Colonic mucosa (tissue), 4 donors: ENCODE measurements at regions of chr12 and their contacts with region 1.

Region 1: GRCh38 chr12:50314629-50315312 is 31.5 kb upstream of the LIMA1 start:
- DNase-seq: no peak
- H3K4me3 ChIP-seq: no peak overlapping the region
- H3K27ac ChIP-seq: no peak overlapping the region
- H3K4me1 ChIP-seq: no peaks in the 10 kb centered on the region
- H3K27me3 ChIP-seq: no peaks in the 10 kb centered on the region
- CTCF ChIP-seq: peak; percentile 14

Region 2: DNA sequence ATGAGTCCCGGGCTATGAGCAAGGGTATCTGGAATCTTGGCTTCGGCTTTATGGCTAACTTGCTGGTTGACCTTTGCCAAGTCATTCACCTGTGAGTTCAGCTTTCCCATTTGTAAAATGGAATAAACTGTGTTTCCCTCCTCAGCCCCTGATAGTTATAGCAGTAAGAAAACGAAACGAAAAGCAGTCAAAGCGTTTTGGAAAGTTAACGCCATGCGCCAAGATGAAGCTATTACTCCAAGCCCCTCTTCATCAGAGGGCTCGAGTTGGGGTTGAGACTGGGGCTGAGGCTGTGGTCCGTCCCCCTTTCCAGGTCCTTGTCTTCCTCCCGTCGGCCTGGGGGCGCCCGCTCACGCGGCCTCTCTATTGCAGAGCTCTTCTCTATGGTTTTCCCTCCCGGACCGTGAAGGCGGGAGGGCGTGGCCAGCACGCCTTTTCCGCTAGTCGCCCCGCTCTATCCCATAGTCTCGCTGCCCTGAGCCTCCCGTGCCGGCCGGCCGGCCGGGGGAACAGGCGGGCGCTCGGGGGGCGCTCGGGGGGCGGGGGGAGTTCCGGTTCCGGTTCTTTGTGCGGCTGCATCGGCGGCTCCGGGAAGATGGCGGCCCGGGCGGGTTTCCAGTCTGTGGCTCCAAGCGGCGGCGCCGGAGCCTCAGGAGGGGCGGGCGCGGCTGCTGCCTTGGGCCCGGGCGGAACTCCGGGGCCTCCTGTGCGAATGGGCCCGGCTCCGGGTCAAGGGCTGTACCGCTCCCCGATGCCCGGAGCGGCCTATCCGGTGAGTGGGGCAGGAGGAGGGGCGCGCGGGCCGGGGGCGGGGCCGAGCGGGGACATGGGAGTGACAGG is 229.8 kb before region 1 on chr12 and contains the start of gene SMARCD1:
- intact Hi-C with region 1: loop called (anchors 10 kb)
- DNase-seq: peak; percentile 92
- H3K4me3 ChIP-seq: peak within 1 kb of the TSS; percentile 93
- H3K27ac ChIP-seq: peak within 1 kb of the TSS; percentile 88
- H3K4me1 ChIP-seq: no peaks in the 10 kb centered on the region
- H3K27me3 ChIP-seq: no peaks in the 10 kb centered on the region
- CTCF ChIP-seq: peak; percentile 25
- total RNA-seq, gene SMARCD1: 30.6 to 43.9 TPM

Region 3: GRCh38 chr12:50132505-50133135 is 182.2 kb before region 1 on chr12:
- intact Hi-C with region 1: loop called (anchors 5 kb)
- DNase-seq: no peak
- H3K4me3 ChIP-seq: no peak overlapping the region
- H3K27ac ChIP-seq: no peak overlapping the region
- H3K4me1 ChIP-seq: no peaks in the 10 kb centered on the region
- H3K27me3 ChIP-seq: no peaks in the 10 kb centered on the region
- CTCF ChIP-seq: peak; percentile 59

Region 4: GRCh38 chr12:50151047-50151687 is 163.6 kb before region 1 on chr12:
- intact Hi-C with region 1: no loop called
- DNase-seq: no peak
- H3K4me3 ChIP-seq: no peak overlapping the region
- H3K27ac ChIP-seq: no peak overlapping the region
- H3K4me1 ChIP-seq: no peaks in the 10 kb centered on the region
- H3K27me3 ChIP-seq: no peaks in the 10 kb centered on the region
- CTCF ChIP-seq: no peak

Region 5: GRCh38 chr12:50201978-50202521 is 112.7 kb before region 1 on chr12:
- intact Hi-C with region 1: loop called (anchors 10 kb)
- DNase-seq: peak; percentile 56
- H3K4me3 ChIP-seq: no peak overlapping the region
- H3K27ac ChIP-seq: peak overlapping the region; percentile 69
- H3K4me1 ChIP-seq: peaks cover 2% of the 10 kb centered on the region
- H3K27me3 ChIP-seq: no peaks in the 10 kb centered on the region
- CTCF ChIP-seq: no peak

Region 6: GRCh38 chr12:50529345-50529744 is 214.6 kb after region 1 on chr12:
- intact Hi-C with region 1: no loop called
- DNase-seq: no peak
- H3K4me3 ChIP-seq: no peak overlapping the region
- H3K27ac ChIP-seq: no peak overlapping the region
- H3K4me1 ChIP-seq: peaks cover 20% of the 10 kb centered on the region
- H3K27me3 ChIP-seq: no peaks in the 10 kb centered on the region
- CTCF ChIP-seq: no peak